Posterior vena cava (tissue), 2 donors: ENCODE measurements at regions of chr3 and their contacts with region 1.

Region 1: DNA sequence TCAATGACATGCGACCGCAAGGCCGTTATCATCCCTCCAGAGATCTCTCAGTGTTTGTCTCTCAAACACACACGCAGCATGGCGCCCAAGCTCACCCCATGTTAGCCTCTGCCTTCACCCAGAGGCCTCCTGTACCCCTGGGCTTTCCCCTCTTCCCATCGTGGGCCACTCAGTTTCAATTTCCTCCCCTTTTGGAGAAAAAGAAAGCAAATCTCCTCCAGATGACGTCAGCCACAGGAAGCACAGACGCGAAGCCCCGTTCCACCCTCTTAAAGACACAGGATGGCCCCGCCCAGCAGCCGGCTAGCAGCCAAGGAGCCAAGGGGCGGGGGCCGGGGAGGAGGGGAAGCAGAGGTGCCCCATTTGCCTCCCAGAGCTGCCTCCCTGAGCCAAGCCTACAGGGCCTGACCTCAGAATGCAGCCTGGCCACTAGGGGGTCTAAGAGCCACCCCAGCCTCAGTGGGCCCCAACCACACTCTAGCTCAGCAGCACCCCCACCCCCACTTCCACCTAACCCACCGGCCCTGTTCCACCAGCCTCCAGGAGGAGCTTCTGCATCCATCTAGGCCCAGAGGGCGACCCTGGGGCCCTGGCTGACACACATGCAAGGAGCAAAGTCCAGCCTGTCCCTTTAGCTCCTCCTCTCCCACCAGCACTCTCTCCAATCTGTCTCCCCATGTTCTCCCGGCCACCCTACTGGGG is 26.5 kb downstream of the ATRIP start:
- DNase-seq: peak; percentile 96

Region 2: DNA sequence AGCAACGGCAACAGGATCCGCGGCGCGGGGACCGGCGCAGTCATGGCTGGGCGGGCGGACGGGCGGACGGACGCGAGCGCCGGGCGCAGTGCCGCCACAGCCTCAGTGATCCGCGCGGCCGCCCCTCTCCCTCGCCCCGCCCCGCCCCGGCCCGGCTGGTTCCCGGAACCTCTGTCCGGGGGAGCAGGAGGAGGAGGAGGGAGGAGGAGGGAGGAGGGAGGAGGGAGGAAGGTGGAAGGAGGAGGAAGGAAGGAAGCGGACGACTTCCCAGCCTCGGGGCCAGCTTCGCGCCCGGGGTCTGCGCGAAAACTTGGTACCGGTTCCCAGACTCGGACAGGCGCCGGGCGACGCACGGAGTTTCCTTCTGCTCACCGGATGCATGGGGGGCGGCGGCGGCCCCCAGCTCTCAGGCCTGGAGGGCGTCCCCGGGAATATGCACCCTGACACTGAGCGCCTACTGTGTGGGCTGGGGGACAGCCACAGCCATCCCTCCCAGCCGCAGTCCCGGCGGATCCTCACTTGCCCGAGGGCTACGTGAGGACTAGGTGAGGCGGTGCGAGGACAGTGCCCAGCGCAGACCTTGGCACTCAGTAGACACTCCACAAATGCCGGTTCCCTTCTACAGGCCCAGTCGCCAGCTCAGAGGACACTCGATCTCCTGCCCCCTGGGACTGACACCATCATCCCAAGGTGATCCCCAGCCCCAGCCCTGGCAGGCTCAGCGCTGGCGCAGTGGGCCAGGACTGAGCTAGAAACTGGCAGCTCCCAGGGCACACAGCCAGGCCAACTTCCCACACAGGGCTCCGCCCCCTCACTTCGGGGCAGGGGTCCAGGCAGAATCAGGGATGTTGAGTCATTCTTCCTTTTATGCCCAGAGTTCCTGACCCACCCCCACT is 31.2 kb after region 1 on chr3 and contains the start of gene SHISA5:
- intact Hi-C with region 1: loop called (anchors 1 to 2 kb)
- DNase-seq: peak; percentile 95
- total RNA-seq, gene SHISA5: 142 to 147 TPM

Region 3: DNA sequence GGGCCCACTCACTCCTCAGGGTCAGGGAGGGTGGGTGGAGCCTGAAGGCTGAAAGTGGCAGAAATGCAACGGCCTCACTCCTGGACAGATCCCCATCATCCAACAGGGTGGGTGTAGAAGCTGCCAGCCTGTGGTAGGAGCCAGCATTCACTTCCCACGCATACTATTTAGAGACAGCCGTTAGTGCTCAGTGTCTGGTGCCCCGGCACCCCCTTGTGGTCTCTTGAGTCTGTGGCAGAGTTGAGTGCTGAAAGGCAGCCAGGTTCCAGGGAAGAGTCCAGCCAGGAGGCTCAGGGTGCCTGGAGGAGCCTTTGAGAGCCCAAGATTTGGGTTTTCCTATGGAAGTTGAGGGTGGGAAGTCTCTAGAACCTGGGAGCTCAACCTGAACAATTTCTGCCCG is 1716.2 kb after region 1 on chr3:
- intact Hi-C with region 1: no loop called
- DNase-seq: no peak